Heart left ventricle (tissue), 16 donors: ENCODE measurements at regions of chr1 and their contacts with region 1.

Region 1: GRCh38 chr1:108746372-108747205 is at the start of gene STXBP3:
- DNase-seq: peak; percentile 99 to 100 (median 99)
- ATAC-seq: peak; percentile 97 to 100 (median 98)
- H3K4me3 ChIP-seq: peak within 1 kb of the TSS; percentile 60 to 93 (median 85)
- H3K27ac ChIP-seq: peak within 1 kb of the TSS; percentile 84 to 99 (median 97)
- H3K4me1 ChIP-seq: peaks cover 0 to 26% (median 13%) of the 10 kb centered on the region in 12 donors
- H3K27me3 ChIP-seq: no peaks in the 10 kb centered on the region
- CTCF ChIP-seq: peak; percentile 90 to 99 (median 95)
- POLR2A ChIP-seq: peak; percentile 94 to 98
- total RNA-seq, gene STXBP3: 22.4 to 42.7 (median 26.1) TPM

Region 2: DNA sequence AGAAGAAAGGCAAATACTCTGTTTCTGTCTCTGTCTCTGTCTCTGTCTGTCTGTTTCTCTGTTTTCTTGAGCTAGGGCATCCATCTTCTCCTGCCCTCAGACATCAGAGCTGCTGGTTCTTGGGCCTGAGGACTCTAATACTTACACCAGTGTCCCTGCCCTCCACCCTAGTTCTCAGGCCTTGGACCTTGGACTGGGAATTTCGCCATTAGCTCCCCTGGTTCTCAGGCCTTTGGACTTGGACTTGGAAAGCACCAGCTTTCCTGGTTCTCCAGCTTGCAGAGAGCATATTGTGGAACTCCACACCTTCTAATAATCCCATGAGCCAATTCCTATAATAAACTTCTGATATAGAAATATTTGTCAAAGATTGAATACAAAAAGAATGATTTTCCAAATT is 263.9 kb before region 1 on chr1:
- intact Hi-C with region 1: no loop called
- DNase-seq: no peak
- ATAC-seq: no peak
- H3K4me3 ChIP-seq: no peak overlapping the region
- H3K27ac ChIP-seq: no peak overlapping the region
- H3K4me1 ChIP-seq: no peaks in the 10 kb centered on the region
- H3K27me3 ChIP-seq: no peaks in the 10 kb centered on the region
- CTCF ChIP-seq: no peak
- POLR2A ChIP-seq: no peak

Region 3: DNA sequence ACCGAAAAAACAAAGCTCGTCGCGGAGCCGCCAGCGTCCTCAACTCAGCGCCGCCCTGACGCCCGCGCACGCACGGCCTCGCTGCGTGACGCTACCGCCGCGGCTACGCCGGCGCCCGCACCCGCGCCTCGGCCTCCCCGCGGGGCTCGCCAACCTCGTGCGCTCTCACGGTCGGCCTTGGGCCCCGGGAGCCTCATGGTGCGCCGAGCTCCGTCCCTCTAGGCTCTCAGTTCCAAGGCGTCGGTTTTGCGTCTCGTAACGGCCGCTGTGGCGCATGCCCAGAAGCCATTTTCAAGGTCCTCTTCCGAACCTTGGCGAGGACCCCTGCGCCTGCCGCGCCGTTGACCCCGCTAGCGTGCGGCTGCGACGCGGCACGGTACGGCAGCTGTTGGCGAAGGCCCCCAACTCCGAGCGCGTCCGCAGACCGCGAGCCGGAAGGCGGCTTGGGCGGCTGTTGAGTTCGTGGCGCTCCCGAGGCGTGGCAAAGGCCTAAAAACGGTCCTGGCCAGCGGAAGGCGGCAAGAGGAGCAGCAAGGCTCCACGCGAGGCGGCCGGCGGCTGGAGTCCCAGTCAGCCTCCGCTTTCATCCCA is 85.5 kb before region 1 on chr1 and contains the start of gene HENMT1:
- intact Hi-C with region 1: loop called in 2 of 10 experiments (anchors 1 to 2 kb)
- DNase-seq: peak; percentile 57 to 83 (median 65)
- ATAC-seq: peak in 3 of 4 donors; percentile 74 to 90 (median 86)
- H3K4me3 ChIP-seq: peak within 1 kb of the TSS; percentile 50 to 73 (median 59)
- H3K27ac ChIP-seq: peak within 1 kb of the TSS; percentile 81 to 99 (median 90)
- H3K4me1 ChIP-seq: peaks cover 0 to 13% (median 5%) of the 10 kb centered on the region in 12 donors
- H3K27me3 ChIP-seq: no peaks in the 10 kb centered on the region
- CTCF ChIP-seq: no peak
- POLR2A ChIP-seq: peak in 1 of 2 donors; percentile 38
- total RNA-seq, gene HENMT1: 0.44 to 4.5 (median 0.93) TPM

Region 4: DNA sequence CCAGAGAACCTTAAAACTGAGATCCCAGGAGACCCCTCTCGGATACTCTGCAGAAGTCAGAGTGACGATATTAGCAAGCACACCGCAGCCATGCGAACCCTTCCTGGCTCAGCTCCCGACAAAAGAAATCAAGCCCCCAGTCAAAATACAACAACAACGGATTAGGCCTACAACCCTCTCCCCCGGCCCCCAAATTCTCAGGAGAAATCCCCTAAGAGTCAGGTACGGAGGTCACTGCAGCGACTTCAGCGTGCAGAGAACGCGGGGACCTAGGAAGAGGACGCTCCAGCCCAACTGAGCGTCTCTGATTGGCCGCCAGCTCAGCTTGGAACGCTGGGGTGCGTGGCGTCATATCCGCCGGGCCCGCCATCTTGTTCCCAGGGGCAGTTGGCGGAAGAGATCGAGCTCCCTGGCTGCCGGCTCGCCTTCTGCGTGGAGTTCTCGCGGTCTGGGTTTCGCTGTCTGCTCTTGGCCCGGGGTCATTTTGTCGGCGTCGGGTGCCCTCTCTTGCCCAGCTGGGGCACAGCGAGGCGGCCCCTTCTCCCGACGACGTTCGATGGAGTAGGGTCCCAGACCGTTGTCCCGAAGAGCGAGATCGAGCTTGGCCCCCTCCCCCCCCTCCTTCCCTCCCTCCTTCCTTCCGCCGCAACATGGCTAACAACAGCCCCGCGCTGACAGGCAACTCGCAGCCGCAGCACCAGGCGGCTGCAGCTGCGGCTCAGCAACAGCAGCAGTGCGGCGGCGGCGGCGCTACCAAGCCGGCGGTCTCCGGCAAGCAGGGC is 54.5 kb before region 1 on chr1 and contains the start of gene PRPF38B:
- intact Hi-C with region 1: loop called in 6 of 10 experiments (anchors 1 to 10 kb)
- DNase-seq: peak; percentile 95 to 97 (median 96)
- ATAC-seq: peak; percentile 99
- H3K4me3 ChIP-seq: peak within 1 kb of the TSS; percentile 60 to 91 (median 84)
- H3K27ac ChIP-seq: peak within 1 kb of the TSS; percentile 93 to 99 (median 97)
- H3K4me1 ChIP-seq: peaks cover 0 to 47% (median 33%) of the 10 kb centered on the region in 12 donors
- H3K27me3 ChIP-seq: no peaks in the 10 kb centered on the region
- CTCF ChIP-seq: no peak
- POLR2A ChIP-seq: peak; percentile 21 to 80
- total RNA-seq, gene PRPF38B: 7.7 to 18.2 (median 13.5) TPM

Region 5: DNA sequence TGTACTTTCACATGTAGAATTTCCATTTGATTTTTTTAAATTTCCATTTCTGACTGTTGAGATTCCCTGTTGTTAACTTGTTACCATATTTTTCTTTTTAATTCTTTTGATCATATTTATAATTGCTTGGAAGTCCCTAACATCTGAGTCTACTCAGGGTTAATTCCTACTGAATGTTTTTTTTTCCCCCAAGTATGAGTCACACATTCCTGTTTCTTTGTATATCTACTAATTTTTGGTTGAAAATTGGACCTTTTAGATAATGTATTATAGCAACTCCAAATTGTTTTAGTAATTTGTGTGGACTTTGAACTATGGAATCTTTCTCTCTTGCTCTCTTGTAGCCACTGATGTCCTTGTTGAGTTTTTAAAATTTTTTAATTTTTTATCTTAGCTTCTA is 54.5 kb after region 1 on chr1:
- intact Hi-C with region 1: loop called in 1 of 10 experiments (anchors 10 kb)
- DNase-seq: no peak
- ATAC-seq: no peak
- H3K4me3 ChIP-seq: no peak overlapping the region
- H3K27ac ChIP-seq: no peak overlapping the region
- H3K4me1 ChIP-seq: peaks cover 0 to 5% (median 0%) of the 10 kb centered on the region in 12 donors
- H3K27me3 ChIP-seq: no peaks in the 10 kb centered on the region
- CTCF ChIP-seq: no peak
- POLR2A ChIP-seq: no peak

Region 6: GRCh38 chr1:108816049-108816893 is 69.7 kb after region 1 on chr1:
- intact Hi-C with region 1: no loop called
- DNase-seq: peak; percentile 71 to 76 (median 75)
- ATAC-seq: peak; percentile 69 to 92 (median 86)
- H3K4me3 ChIP-seq: peak overlapping the region in 10 of 12 donors; percentile 10 to 48 (median 37)
- H3K27ac ChIP-seq: peak overlapping the region in 11 of 12 donors; percentile 21 to 85 (median 73)
- H3K4me1 ChIP-seq: peaks cover 0 to 28% (median 11%) of the 10 kb centered on the region in 12 donors
- H3K27me3 ChIP-seq: no peaks in the 10 kb centered on the region
- CTCF ChIP-seq: no peak
- POLR2A ChIP-seq: no peak

Region 7: DNA sequence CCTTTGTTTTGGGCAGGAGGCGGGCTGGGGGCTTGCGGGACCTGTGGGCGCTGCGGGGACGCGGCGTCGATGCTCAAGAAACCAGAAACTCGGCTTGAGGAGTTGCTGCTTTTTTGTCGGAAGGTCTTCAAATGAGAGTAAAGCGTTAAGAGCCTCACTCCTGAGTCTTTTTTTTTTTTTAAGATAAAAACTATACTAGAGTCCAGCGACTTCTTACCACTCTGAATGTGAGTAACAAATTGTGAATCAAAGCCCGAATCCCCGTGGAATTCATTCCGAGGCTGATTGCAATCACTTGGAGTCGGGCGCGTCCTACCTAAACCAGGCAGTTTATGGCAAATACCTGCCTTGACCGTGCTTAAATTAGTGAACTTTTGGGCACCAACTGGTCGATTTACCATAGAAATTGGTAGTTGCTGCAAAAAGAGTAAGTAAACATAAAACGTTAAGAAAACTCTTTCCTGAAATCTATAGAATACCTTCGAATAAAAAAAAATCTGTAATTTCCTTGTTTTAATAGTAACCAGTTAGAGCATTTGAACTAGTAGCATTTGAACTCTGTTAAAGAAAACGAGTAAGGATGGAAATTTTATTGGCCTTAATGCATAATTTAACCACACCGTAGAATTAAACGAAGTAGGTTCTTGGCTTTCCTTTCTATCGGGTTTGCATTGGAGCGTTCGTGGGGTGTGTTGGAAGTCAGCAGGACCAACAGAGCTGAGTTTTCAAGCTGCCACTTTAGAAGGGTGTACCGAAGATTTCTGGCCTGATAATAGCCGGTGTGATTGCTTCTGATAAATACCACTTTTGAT is 131.0 kb after region 1 on chr1:
- intact Hi-C with region 1: loop called in 1 of 10 experiments (anchors 5 kb)
- DNase-seq: no peak
- ATAC-seq: peak in 1 of 4 donors; percentile 4
- H3K4me3 ChIP-seq: peak overlapping the region; percentile 65 to 97 (median 80)
- H3K27ac ChIP-seq: peak overlapping the region in 7 of 12 donors; percentile 4 to 85 (median 36)
- H3K4me1 ChIP-seq: peaks cover 0 to 24% (median 4%) of the 10 kb centered on the region in 12 donors
- H3K27me3 ChIP-seq: no peaks in the 10 kb centered on the region
- CTCF ChIP-seq: no peak
- POLR2A ChIP-seq: no peak

Region 8: GRCh38 chr1:108897865-108898720 is 151.5 kb after region 1 on chr1:
- intact Hi-C with region 1: loop called in 1 of 10 experiments (anchors 10 kb)
- DNase-seq: peak in 1 of 5 donors; percentile 17
- ATAC-seq: peak in 3 of 4 donors; percentile 68 to 74 (median 73)
- H3K4me3 ChIP-seq: no peak overlapping the region
- H3K27ac ChIP-seq: peak overlapping the region in 1 of 12 donors; percentile 71
- H3K4me1 ChIP-seq: no peaks in the 10 kb centered on the region
- H3K27me3 ChIP-seq: no peaks in the 10 kb centered on the region
- CTCF ChIP-seq: peak; percentile 65 to 84 (median 76)
- POLR2A ChIP-seq: no peak